B cell (primary cell): ENCODE measurements at regions of chr11 and their contacts with region 1.

Region 1: GRCh38 chr11:123707606-123708205 is 33.8 kb downstream of the ZNF202 start:
- DNase-seq: peak; percentile 55
- ATAC-seq: no peak
- H3K4me3 ChIP-seq: no peak overlapping the region
- H3K4me3 Mint-ChIP-seq: no peak overlapping the region
- H3K27ac ChIP-seq: no peak overlapping the region
- H3K27ac Mint-ChIP-seq: no peak overlapping the region
- H3K4me1 ChIP-seq: peaks cover 1 to 3% of the 10 kb centered on the region in 2 donors
- H3K4me1 Mint-ChIP-seq: peaks cover 7% of the 10 kb centered on the region
- H3K27me3 ChIP-seq: peaks cover 0 to 3% (median 0%) of the 10 kb centered on the region in 4 experiments
- H3K27me3 Mint-ChIP-seq: peaks cover 10% of the 10 kb centered on the region
- CTCF ChIP-seq: peak; percentile 75

Region 2: DNA sequence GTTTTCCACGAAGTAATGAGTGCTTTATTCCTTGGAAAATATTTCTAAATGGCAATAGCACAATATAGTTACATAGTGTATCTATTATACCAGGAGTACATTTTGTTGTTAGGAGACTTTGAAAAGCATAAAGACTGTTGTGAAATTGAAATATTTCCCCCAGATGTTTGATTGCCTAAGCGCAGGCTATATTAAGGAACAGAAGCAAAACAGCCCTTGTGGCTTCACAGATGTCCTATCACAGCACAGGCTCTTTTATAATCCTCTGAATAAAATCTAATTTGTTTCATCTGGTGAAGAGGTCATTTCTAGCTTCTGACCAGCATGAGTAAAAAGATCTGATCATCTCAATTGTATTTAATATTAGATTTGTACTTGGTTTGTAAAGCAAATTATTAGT is 774.3 kb before region 1 on chr11:
- CTCF ChIA-PET with region 1: no interaction called
- POLR2A ChIA-PET with region 1: no interaction called
- intact Hi-C with region 1: no loop called
- DNase-seq: no peak
- ATAC-seq: no peak
- H3K4me3 ChIP-seq: no peak overlapping the region
- H3K4me3 Mint-ChIP-seq: no peak overlapping the region
- H3K27ac ChIP-seq: no peak overlapping the region
- H3K27ac Mint-ChIP-seq: no peak overlapping the region
- H3K4me1 ChIP-seq: no peaks in the 10 kb centered on the region
- H3K4me1 Mint-ChIP-seq: no peaks in the 10 kb centered on the region
- H3K27me3 ChIP-seq: no peaks in the 10 kb centered on the region
- H3K27me3 Mint-ChIP-seq: peaks cover 6% of the 10 kb centered on the region
- CTCF ChIP-seq: no peak

Region 3: DNA sequence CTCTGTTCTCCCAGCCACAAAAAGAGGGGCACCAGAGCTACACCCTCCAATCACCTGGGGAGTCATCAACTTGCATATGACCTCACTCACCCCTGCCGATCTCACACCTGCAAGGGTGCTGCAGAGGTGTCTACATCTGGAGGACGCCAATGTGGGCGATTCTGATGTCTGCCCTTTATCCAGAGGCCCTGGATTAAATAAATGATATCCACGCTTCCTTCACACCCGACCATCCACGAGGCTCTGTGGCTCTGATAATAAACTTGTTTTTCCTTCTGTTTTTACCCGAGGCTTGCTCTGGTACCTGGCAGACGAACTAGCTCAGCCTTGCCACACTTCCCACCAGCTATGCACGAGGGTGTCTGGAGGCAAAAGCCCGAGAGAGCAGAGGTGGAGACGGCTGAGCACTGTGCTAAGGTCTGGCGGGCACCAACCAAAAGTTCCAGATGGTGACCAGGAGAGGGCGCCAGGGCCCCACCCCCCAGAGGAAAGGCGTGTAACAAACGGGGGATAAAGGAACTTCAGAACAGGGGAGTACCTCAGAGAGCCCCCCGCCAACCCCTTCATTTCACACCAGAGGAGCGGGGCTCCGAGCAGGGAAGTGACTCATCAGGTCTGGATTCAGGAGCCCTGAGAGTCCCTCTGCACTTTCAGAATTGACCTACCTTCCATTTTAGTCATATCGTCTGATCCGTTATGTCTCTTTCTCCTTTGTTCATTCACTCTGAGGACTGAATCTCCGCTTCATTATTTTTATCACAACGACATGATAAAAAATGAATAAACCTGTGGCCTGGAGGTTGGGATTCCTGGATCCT is 66.8 kb before region 1 on chr11:
- CTCF ChIA-PET with region 1: interaction called, 28 read pairs
- POLR2A ChIA-PET with region 1: no interaction called
- intact Hi-C with region 1: loop called (anchors 1 kb)
- DNase-seq: peak; percentile 57
- ATAC-seq: peak; percentile 33
- H3K4me3 ChIP-seq: no peak overlapping the region
- H3K4me3 Mint-ChIP-seq: no peak overlapping the region
- H3K27ac ChIP-seq: no peak overlapping the region
- H3K27ac Mint-ChIP-seq: no peak overlapping the region
- H3K4me1 ChIP-seq: peaks cover 0 to 6% of the 10 kb centered on the region in 2 donors
- H3K4me1 Mint-ChIP-seq: peaks cover 3% of the 10 kb centered on the region
- H3K27me3 ChIP-seq: peaks cover 0 to 7% (median 3%) of the 10 kb centered on the region in 4 experiments
- H3K27me3 Mint-ChIP-seq: peaks cover 34% of the 10 kb centered on the region
- CTCF ChIP-seq: peak; percentile 82

Region 4: GRCh38 chr11:123719452-123719851 is 11.7 kb after region 1 on chr11:
- CTCF ChIA-PET with region 1: interaction called, 21 read pairs
- POLR2A ChIA-PET with region 1: no interaction called
- intact Hi-C with region 1: no loop called
- DNase-seq: no peak
- ATAC-seq: no peak
- H3K4me3 ChIP-seq: no peak overlapping the region
- H3K4me3 Mint-ChIP-seq: no peak overlapping the region
- H3K27ac ChIP-seq: no peak overlapping the region
- H3K27ac Mint-ChIP-seq: no peak overlapping the region
- H3K4me1 ChIP-seq: no peaks in the 10 kb centered on the region
- H3K4me1 Mint-ChIP-seq: no peaks in the 10 kb centered on the region
- H3K27me3 ChIP-seq: peaks cover 0 to 3% (median 0%) of the 10 kb centered on the region in 4 experiments
- H3K27me3 Mint-ChIP-seq: peaks cover 27% of the 10 kb centered on the region
- CTCF ChIP-seq: no peak

Region 5: GRCh38 chr11:123856444-123856843 is 148.7 kb after region 1 on chr11:
- CTCF ChIA-PET with region 1: no interaction called
- POLR2A ChIA-PET with region 1: no interaction called
- intact Hi-C with region 1: no loop called
- DNase-seq: no peak
- ATAC-seq: no peak
- H3K4me3 ChIP-seq: no peak overlapping the region
- H3K4me3 Mint-ChIP-seq: no peak overlapping the region
- H3K27ac ChIP-seq: no peak overlapping the region
- H3K27ac Mint-ChIP-seq: no peak overlapping the region
- H3K4me1 ChIP-seq: no peaks in the 10 kb centered on the region
- H3K4me1 Mint-ChIP-seq: no peaks in the 10 kb centered on the region
- H3K27me3 ChIP-seq: no peaks in the 10 kb centered on the region
- H3K27me3 Mint-ChIP-seq: peaks cover 5% of the 10 kb centered on the region
- CTCF ChIP-seq: no peak